ENCODE measurements at regions of chr22 and their contacts with region 1.

Region 1: DNA sequence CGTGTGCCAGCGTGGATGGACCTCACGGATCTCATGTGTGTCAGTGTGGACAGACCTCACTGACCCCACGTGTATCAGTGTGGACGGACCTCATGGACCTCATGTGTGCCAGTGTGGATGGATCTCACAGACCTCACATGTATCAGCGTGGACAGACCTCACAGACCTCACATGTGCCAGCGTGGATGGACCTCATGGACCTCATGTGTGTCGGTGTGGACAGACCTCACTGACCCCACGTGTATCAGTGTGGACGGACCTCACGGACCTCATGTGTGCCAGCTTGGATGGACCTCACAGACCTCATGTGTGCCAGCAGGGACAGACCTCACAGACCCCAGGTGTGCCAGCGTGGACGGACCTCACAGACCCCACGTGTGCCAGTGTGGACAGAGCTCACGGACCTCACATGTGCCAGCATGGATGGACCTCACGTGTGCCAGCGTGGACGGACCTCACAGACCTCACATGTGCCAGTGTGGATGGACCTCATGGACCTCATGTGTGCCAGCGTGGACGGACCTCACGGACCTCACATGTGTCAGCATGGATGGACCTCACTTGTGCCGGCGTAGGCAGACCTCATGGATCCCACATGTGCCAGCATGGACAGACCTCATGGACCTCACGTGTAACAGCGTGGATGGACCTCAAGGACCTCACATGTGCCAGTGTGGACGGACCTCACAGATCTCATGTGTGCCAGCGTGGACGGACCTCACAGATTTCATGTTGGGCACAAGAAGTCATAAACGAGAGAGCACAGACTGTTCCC is 18.2 kb downstream of the TTLL8 start:
- DNase-seq: no peak
- H3K4me3 ChIP-seq: no peak overlapping the region
- H3K27ac ChIP-seq: no peak overlapping the region
- H3K4me1 ChIP-seq: peaks cover 0 to 37% (median 22%) of the 10 kb centered on the region in 4 experiments
- H3K27me3 ChIP-seq: no peaks in the 10 kb centered on the region

Region 2: DNA sequence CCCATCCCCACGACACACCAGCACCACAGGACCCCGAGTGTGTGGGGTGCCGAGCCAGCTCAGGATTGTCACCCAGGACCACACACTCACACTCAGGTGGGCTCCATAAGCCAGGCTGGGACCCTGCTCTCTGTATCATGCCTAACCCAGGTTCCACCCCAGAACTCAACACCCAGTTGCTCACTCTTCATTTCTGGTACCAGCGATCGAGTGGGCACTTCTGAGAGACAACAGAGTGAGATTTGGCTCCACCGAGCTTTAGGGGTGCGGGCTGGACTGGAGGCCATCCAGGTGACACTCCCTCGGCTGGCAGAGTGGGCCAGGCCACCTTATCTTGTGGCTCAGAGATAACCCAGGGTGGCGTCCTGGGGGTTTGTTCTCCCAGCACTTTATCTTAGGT is 1536.0 kb before region 1 on chr22:
- CTCF ChIA-PET with region 1: no interaction called
- POLR2A ChIA-PET with region 1: interaction called, 10 read pairs
- DNase-seq: no peak
- H3K4me3 ChIP-seq: no peak overlapping the region
- H3K27ac ChIP-seq: no peak overlapping the region
- H3K4me1 ChIP-seq: no peaks in the 10 kb centered on the region
- H3K27me3 ChIP-seq: peaks cover 0 to 10% (median 0%) of the 10 kb centered on the region in 5 experiments

Region 3: DNA sequence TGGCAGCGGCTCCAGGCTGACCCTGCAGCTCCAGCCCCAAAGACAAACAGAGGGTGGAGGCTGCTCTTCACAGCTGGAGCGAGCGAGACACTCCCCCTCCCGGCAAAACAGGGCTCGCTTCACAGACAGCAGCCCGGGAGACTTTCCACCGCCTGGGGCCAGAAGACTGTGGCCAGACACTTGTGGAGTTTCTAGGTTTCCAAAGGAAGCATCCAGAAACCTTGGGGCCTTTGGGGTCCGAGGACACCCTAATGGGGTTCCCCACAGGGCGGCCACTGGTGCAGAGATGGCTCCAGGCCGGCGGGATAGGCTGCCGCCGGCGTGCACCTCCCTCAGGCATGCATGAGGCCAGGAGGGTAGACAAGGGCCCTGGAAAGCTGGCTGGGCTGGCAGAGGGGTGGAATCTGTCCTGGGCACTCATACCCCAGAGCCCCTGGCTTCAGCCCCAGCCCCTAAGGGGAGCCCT is 27.1 kb before region 1 on chr22 and contains the start of gene IL17REL:
- CTCF ChIA-PET with region 1: no interaction called
- POLR2A ChIA-PET with region 1: no interaction called
- DNase-seq: no peak
- H3K4me3 ChIP-seq: no peak within 1 kb of the TSS
- H3K27ac ChIP-seq: no peak within 1 kb of the TSS
- H3K4me1 ChIP-seq: peaks cover 0 to 45% (median 23%) of the 10 kb centered on the region in 4 experiments
- H3K27me3 ChIP-seq: peaks cover 0 to 53% (median 11%) of the 10 kb centered on the region in 5 experiments

Region 4: DNA sequence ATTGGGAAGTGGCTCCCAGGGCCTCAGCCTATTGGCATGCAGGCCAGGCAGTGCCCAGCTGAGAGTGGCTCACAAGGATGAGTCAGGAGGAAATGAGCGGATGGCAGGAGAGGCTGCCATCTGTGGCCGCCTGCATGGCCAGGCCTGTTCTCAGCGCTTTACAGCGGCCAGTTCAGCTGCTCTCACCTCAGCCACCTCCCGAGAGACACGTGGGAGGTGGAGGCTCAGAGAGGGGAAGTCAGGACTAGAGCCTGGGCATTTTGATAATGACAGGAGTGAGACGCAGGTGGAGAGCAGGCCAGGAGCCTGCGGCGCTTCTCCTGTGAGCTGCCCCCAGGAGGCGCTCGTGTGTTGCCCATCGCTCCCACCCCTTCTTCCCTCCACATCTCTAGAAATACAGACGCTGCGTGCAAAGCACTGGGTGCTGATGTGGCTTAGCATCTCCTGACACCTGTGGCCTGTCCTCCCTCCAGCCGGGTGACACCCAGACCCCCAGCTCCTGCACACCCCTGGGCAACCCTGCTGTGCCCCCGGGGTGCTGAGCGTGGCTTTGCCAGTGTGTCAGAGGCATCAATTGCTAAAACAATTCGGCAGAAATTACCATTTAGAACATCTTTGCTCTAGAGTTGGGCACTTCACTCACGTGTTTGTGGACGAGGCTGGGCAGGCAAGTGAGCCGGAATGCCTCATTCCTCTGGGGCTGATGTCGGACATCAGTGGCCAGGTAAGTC is 109.3 kb after region 1 on chr22:
- CTCF ChIA-PET with region 1: no interaction called
- POLR2A ChIA-PET with region 1: no interaction called
- DNase-seq: peak; percentile 78 to 88 (median 86)
- H3K4me3 ChIP-seq: peak overlapping the region in 1 of 7 experiments; percentile 16
- H3K27ac ChIP-seq: no peak overlapping the region
- H3K4me1 ChIP-seq: peaks cover 0 to 12% (median 7%) of the 10 kb centered on the region in 4 experiments
- H3K27me3 ChIP-seq: no peaks in the 10 kb centered on the region

Region 5: DNA sequence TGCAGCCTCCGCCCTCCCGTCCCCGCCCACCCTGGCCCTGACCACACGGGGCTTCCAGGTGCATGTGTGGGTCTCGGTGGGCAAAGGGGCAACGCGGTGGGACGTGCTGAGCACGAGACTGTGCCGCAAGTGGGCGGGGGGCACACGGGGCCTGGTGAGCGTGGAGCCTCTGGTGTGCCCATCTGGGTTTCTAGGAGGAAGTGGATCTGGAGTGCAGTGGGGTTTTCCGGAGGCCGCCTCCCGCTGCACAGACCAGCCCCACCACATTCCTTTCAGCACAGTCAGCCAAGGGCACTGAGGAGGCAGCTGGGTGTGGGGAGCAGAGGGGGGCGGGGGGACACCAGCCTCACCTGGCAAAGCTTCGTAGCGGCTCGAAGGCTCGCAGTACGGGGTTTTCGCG is 242.5 kb after region 1 on chr22:
- CTCF ChIA-PET with region 1: no interaction called
- POLR2A ChIA-PET with region 1: no interaction called
- DNase-seq: no peak
- H3K4me3 ChIP-seq: no peak overlapping the region
- H3K27ac ChIP-seq: no peak overlapping the region
- H3K4me1 ChIP-seq: no peaks in the 10 kb centered on the region
- H3K27me3 ChIP-seq: no peaks in the 10 kb centered on the region